Ascending aorta (tissue), 2 donors: ENCODE measurements at regions of chr1 and their contacts with region 1.

Region 1: GRCh38 chr1:61641578-61642336 is 83.2 kb downstream of the TM2D1 start:
- DNase-seq: peak; percentile 47 to 92
- H3K4me3 ChIP-seq: peak overlapping the region; percentile 14 to 62
- H3K27ac ChIP-seq: peak overlapping the region; percentile 91 to 94
- H3K4me1 ChIP-seq: peaks cover 29 to 44% of the 10 kb centered on the region in 2 donors
- H3K27me3 ChIP-seq: no peaks in the 10 kb centered on the region
- CTCF ChIP-seq: peak; percentile 73 to 92 (median 77)

Region 2: DNA sequence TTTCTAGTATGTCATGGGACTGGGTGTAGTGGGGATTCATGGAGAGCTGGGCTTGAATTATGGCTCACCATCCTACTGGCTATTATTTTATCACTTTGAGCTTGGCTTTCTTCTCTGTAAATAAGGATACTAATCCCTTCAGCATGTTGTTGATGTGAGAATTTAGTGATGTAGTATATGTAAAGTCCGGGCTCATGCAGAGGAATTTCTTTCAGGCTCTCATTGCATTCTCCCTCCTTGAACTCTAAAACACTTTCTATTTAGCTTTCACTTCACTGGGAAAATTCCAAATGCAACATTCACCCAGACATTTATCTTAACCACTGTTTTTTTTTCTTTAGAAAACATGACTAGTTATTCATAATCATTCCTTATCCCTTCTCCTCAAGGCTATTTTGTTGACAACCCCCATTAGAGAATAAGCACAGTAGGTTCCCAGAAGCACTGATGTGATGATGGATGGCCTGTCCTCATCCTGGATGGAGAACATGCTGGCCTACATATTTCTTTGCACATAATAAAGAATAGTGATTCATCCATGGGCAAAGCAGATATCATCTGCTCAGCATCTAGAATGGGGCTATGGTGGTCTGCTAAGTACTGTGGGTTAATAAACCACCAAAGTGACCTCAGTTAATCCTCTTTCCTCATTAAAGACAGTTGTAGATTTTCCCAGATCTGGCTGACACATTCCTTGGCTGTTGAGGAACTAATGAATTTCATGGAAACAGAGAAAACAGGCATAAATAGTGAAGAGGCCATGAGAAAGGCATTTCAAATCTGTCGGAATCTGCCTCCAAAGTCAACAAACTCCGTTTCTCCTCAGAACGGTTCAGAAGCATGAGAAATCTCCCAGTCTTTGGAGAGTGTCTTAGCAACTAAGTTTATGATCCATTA is 1647.2 kb before region 1 on chr1:
- intact Hi-C with region 1: loop called (anchors 10 kb)
- DNase-seq: peak in 1 of 2 donors; percentile 87
- H3K4me3 ChIP-seq: no peak overlapping the region
- H3K27ac ChIP-seq: peak overlapping the region; percentile 76 to 79
- H3K4me1 ChIP-seq: peaks cover 0 to 26% of the 10 kb centered on the region in 2 donors
- H3K27me3 ChIP-seq: no peaks in the 10 kb centered on the region
- CTCF ChIP-seq: no peak

Region 3: GRCh38 chr1:60969971-60970509 is 671.7 kb before region 1 on chr1:
- intact Hi-C with region 1: loop called (anchors 2 kb)
- DNase-seq: no peak
- H3K4me3 ChIP-seq: no peak overlapping the region
- H3K27ac ChIP-seq: peak overlapping the region; percentile 39 to 46
- H3K4me1 ChIP-seq: peaks cover 0 to 24% of the 10 kb centered on the region in 2 donors
- H3K27me3 ChIP-seq: no peaks in the 10 kb centered on the region
- CTCF ChIP-seq: peak in 2 of 3 experiments; percentile 40 to 61

Region 4: GRCh38 chr1:61092642-61093041 is 549.1 kb before region 1 on chr1:
- intact Hi-C with region 1: loop called (anchors 5 kb)
- DNase-seq: no peak
- H3K4me3 ChIP-seq: peak overlapping the region; percentile 7 to 95
- H3K27ac ChIP-seq: peak overlapping the region; percentile 95 to 98
- H3K4me1 ChIP-seq: peaks cover 0 to 20% of the 10 kb centered on the region in 2 donors
- H3K27me3 ChIP-seq: no peaks in the 10 kb centered on the region
- CTCF ChIP-seq: no peak

Region 5: GRCh38 chr1:61287734-61288133 is 354.0 kb before region 1 on chr1:
- intact Hi-C with region 1: loop called (anchors 5 kb)
- DNase-seq: no peak
- H3K4me3 ChIP-seq: no peak overlapping the region
- H3K27ac ChIP-seq: peak overlapping the region; percentile 69 to 76
- H3K4me1 ChIP-seq: peaks cover 4 to 54% of the 10 kb centered on the region in 2 donors
- H3K27me3 ChIP-seq: no peaks in the 10 kb centered on the region
- CTCF ChIP-seq: no peak

Region 6: DNA sequence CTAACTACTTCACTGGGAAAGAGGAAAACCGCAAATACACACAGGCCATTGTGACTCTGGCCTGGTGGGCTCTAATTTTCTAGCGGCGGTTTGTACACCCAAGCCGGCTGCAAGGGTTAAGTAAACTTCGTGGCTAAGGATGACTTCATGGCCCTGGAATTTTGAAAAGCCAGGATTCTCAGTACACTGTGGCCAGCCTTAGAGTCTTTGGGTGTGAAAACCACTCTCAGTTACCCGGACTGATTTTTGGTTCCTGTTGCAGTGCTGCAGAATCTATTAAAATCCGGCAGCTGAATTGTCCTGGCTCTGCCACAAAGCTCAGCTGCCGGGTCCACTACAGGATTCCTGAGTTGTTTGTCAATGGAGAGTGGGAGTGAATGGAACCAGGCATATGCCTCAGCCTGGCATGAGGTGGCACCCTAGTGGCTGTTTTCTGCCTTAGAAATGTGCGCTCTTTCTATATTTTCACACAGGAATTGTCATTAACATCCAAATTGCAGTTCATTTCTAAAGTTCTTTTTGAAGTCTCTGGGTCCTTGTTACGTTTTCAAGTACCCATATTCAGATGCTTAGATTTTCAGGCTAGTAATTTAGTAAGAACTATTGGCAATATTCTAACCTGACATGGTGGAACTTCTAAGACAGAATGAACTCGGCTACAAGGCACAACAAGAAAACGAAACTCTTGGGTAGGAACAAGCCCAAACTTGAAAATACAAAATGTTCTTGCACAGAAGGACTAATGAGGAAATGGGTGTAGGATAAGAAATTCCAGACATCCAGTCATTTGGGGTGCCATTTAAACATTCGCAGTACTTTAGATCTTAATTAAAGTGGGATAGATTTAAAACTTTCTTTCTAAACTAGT is 303.5 kb before region 1 on chr1:
- intact Hi-C with region 1: loop called (anchors 1 kb)
- DNase-seq: peak; percentile 38 to 92
- H3K4me3 ChIP-seq: peak overlapping the region; percentile 27 to 54
- H3K27ac ChIP-seq: peak overlapping the region; percentile 86 to 88
- H3K4me1 ChIP-seq: peaks cover 3 to 45% of the 10 kb centered on the region in 2 donors
- H3K27me3 ChIP-seq: no peaks in the 10 kb centered on the region
- CTCF ChIP-seq: peak; percentile 71 to 80 (median 75)

Region 7: DNA sequence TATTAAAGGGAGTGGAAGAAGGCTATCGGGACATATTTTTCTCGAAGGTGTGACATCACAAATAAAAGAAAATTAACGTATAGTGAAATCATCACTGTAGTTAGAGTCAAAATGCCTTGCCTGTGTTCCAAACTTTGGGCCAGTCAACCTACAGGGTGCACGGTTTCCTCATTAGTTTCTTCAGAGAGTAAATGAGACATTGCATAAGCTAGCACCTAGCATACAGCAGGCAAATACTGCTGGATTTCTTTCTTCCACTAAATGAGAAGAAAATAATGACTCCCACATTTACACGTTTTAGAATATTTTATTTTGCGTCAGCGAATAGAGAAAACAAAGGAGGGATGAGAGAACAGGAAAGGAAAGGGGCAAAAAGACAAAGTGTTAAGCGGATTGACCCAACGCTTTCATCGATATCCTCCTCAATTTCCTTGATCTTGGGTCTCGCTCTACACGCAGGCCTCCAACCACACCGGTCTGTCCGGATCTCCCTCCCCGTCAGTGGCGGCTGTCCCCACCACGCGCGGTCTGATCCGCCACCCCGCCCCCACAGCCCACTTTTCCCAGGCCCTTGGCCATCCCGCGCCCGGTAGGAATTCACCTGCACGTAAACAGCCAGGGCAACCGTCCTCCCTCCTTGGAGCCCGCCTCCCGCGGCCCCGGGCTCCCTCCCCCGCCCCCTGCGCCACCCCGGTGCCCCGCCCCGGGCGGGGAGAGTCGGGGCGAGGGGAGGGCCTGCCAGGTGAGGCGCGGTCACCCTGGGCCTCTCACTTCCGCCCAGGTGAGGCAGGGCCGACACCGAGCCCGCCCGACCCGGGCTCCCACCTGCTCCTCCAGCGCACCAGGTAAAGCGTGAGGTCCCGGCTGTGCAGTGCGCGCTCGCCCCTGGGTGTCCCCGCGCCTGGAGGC is 100.2 kb after region 1 on chr1 and contains the start of gene PATJ:
- intact Hi-C with region 1: loop called (anchors 5 kb)
- DNase-seq: peak in 1 of 2 donors; percentile 70
- H3K4me3 ChIP-seq: peak within 1 kb of the TSS; percentile 79 to 94
- H3K27ac ChIP-seq: peak within 1 kb of the TSS; percentile 97 to 99
- H3K4me1 ChIP-seq: peaks cover 0 to 21% of the 10 kb centered on the region in 2 donors
- H3K27me3 ChIP-seq: no peaks in the 10 kb centered on the region
- CTCF ChIP-seq: no peak
- total RNA-seq, gene PATJ: 26.7 TPM

Region 8: DNA sequence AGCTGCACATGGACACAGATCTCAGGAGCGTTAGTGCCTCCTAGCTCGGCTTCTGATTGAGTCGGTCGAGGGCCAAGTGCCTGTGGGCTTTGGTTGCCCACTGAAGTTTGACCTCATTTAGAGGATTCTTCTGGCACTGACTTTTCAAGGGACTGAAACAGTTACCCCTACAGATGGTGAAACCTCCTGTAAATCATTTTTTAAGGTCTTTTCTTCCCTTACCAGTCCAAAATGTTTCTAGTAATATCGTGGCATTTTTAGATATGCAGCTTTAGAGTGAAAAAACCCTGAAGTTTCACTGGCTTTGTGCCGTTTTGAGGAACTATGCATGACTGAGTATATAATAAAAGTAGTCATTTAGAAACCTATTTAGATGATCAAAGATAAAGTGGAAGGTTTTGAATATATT is 518.2 kb after region 1 on chr1:
- intact Hi-C with region 1: no loop called
- DNase-seq: no peak
- H3K4me3 ChIP-seq: no peak overlapping the region
- H3K27ac ChIP-seq: no peak overlapping the region
- H3K4me1 ChIP-seq: no peaks in the 10 kb centered on the region
- H3K27me3 ChIP-seq: no peaks in the 10 kb centered on the region
- CTCF ChIP-seq: no peak